ENCODE measurements at regions of chr13 and their contacts with region 1.

Region 1: GRCh38 chr13:111216166-111216960 is 101.3 kb downstream of the ARHGEF7 start:
- DNase-seq: peak; percentile 33
- H3K4me3 ChIP-seq: no peak overlapping the region
- H3K27ac ChIP-seq: no peak overlapping the region
- H3K4me1 ChIP-seq: no peaks in the 10 kb centered on the region
- H3K27me3 ChIP-seq: no peaks in the 10 kb centered on the region
- CTCF ChIP-seq: no peak

Region 2: GRCh38 chr13:111066544-111066943 is 149.8 kb before region 1 on chr13:
- intact Hi-C with region 1: loop called (anchors 5 kb)
- DNase-seq: no peak
- H3K4me3 ChIP-seq: peak overlapping the region; percentile 60
- H3K27ac ChIP-seq: no peak overlapping the region
- H3K4me1 ChIP-seq: no peaks in the 10 kb centered on the region
- H3K27me3 ChIP-seq: no peaks in the 10 kb centered on the region
- CTCF ChIP-seq: no peak

Region 3: DNA sequence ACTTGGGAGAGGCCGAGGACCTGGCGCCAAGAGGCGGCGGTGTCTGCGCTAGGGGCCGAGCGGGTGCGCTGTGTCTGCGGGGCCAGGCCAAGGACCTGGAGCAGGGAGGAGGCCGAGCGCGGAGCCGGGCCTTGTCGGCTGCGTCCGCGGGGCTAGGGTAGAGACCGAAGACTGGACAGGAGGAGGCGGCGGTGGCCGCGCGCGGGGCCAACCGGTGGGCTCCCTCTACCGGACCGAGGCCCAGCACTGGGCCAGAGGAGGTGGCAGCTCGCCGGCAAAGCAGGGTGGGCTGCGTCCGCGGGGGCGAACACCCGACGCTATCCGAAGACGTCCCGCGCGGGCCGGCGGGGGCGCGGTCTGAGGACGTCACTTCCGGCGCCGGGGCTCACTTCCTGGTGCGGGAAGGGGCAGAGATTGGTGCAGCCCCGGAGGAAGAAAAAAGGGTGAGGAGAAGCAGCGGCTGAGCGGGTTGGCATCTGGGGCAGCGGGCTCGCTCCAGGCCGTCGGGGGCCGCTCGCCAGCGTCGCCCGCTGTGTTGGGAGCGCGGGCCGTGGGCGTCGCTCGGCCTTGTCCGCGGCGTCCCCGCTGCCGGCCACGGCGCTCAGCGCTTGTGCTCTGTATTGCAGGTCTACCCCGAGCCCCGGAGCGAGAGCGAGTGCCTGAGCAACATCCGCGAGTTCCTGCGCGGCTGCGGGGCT is 62.9 kb before region 1 on chr13:
- intact Hi-C with region 1: loop called (anchors 10 kb)
- DNase-seq: peak; percentile 94
- H3K4me3 ChIP-seq: peak overlapping the region; percentile 88
- H3K27ac ChIP-seq: peak overlapping the region; percentile 99
- H3K4me1 ChIP-seq: peaks cover 11% of the 10 kb centered on the region
- H3K27me3 ChIP-seq: no peaks in the 10 kb centered on the region
- CTCF ChIP-seq: no peak

Measured in colonic mucosa (tissue), 4 donors.